Endothelial cell of umbilical vein (primary cell): ENCODE measurements at regions of chr16 and their contacts with region 1.

Region 1: GRCh38 chr16:75622761-75623605 is at the start of gene ADAT1:
- DNase-seq: peak; percentile 99
- H3K4me3 ChIP-seq: peak within 1 kb of the TSS; percentile 49 to 96 (median 94)
- H3K27ac ChIP-seq: peak within 1 kb of the TSS; percentile 75
- H3K4me1 ChIP-seq: peaks cover 24% of the 10 kb centered on the region
- H3K27me3 ChIP-seq: no peaks in the 10 kb centered on the region
- CTCF ChIP-seq: no peak
- POLR2A ChIP-seq: peak; percentile 95
- total RNA-seq, gene ADAT1: 56.6 and 57.9 TPM in 2 replicates

Region 2: DNA sequence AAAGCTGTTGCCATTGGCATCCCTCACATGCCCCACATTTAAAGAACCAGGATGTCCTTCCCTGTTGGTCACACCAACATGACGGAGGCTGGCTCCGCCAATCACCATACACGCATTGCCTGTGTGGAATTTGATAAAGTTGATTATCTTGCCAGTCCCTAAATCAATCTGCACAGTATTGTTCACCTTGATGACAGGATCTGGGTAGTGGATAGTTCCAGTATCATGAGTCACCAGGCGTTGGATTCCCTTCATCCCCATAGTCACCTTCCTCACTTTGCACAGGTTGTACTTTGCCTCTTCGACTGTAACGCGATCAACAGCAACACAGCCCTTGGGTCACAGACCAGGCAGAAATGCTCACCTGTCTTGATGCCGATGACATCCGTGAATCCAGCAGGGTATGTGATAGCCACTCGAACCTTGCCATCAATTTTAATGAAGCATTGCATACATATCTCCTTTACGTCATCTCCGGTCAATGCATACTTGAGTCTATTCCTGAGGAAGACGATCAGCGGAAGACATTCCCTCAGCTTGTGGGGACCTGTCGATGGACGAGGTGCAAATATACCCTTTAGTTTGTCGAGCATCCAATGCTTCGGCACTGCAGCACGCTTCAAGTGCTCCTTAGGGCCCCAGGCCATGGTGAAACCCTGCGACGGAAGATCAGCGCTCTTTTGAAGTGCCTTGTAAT is 430.2 kb before region 1 on chr16:
- CTCF ChIA-PET with region 1: no interaction called
- POLR2A ChIA-PET with region 1: no interaction called
- dilution Hi-C with region 1: no loop called
- intact Hi-C with region 1: no loop called
- DNase-seq: no peak
- H3K4me3 ChIP-seq: no peak overlapping the region
- H3K27ac ChIP-seq: no peak overlapping the region
- H3K4me1 ChIP-seq: no peaks in the 10 kb centered on the region
- H3K27me3 ChIP-seq: peaks cover 6 to 7% of the 10 kb centered on the region in 2 experiments
- CTCF ChIP-seq: no peak
- POLR2A ChIP-seq: no peak

Region 3: DNA sequence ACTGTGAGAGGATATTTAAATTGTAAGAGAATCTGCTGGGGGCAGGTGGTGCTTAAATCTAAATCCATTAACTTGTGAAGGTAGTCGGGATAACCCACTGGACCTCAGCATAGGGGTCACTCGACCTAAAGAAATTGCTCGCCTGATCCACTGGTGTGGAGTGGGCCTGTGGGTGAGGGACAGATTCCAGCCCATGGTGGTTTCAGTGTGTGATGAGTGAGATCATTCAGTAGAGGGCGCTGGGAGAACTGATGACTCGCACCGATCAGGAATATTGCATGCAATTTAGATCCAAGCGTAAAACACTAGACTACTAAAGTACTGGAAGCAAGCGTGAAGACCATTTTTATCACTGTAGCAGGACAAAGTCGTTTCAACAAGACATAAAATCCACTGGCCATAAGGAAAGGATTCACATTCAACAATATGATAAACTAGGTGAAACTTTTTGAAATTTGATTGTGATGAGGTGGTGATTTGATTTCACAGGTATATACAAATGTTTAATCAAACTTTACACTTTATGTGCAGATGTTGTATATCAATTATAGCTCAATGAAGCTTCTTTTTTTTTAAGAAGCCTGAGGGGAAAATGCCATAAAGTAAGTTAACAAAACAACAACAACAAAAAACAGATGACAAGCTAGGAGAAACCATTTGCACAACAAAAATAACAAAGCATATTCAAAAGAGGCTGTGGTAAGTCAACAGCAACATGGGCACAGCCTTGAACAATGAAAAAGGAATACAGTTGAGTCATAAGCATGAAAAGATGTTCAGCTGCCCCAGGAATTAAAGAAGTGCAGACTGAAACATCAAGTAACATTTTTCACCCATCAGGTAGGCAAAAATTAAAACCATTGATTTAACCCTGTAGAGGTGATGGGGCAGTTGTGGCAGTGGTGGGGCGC is 151.0 kb before region 1 on chr16:
- CTCF ChIA-PET with region 1: interaction called, 10 read pairs
- POLR2A ChIA-PET with region 1: no interaction called
- dilution Hi-C with region 1: no loop called
- intact Hi-C with region 1: loop called (anchors 1 kb)
- DNase-seq: peak; percentile 67
- H3K4me3 ChIP-seq: no peak overlapping the region
- H3K27ac ChIP-seq: no peak overlapping the region
- H3K4me1 ChIP-seq: no peaks in the 10 kb centered on the region
- H3K27me3 ChIP-seq: no peaks in the 10 kb centered on the region
- CTCF ChIP-seq: peak; percentile 65 to 74
- POLR2A ChIP-seq: no peak

Region 4: GRCh38 chr16:75566040-75566810 is 56.8 kb before region 1 on chr16 and contains the start of gene GABARAPL2:
- CTCF ChIA-PET with region 1: interaction called, 4 read pairs
- POLR2A ChIA-PET with region 1: no interaction called
- dilution Hi-C with region 1: no loop called
- intact Hi-C with region 1: loop called (anchors 1 kb)
- DNase-seq: peak; percentile 84
- H3K4me3 ChIP-seq: peak within 1 kb of the TSS; percentile 48 to 83 (median 79)
- H3K27ac ChIP-seq: no peak within 1 kb of the TSS
- H3K4me1 ChIP-seq: peaks cover 9% of the 10 kb centered on the region
- H3K27me3 ChIP-seq: peaks cover 7 to 24% of the 10 kb centered on the region in 2 experiments
- CTCF ChIP-seq: no peak
- POLR2A ChIP-seq: peak; percentile 66
- total RNA-seq, gene GABARAPL2: 77.9 and 82.5 TPM in 2 replicates

Region 5: DNA sequence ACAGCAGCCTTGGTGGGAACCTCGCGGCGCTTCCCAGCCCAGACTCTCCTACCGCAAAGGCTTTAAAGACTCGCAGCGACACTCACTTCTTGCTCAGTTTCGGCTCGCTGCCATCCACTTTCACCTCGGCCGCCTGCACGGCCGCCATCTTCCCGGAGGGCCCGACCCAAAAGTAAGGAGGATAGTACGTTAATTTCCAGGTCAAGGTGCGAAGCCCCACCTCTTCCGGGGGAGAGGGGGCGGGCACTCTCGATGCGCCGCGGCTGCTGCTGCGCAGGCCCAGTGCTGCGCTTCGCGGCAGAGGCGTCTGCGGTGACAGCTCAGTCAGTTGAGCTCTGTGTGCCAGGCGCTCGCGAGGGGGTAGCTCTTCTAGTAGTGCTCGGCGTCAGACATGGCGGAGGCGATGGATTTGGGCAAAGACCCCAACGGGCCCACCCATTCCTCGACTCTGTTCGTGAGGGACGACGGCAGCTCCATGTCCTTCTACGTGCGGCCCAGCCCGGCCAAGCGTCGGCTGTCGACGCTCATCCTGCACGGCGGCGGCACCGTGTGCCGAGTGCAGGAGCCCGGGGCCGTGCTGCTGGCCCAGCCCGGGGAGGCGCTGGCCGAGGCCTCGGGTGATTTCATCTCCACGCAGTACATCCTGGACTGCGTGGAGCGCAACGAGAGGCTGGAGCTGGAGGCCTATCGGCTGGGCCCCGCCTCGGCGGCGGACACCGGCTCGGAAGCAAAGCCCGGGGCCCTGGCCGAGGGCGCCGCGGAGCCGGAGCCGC is 24.7 kb after region 1 on chr16 and contains the starts of genes KARS1 and TERF2IP:
- CTCF ChIA-PET with region 1: interaction called, 8 read pairs
- POLR2A ChIA-PET with region 1: interaction called, 12 read pairs
- dilution Hi-C with region 1: no loop called
- intact Hi-C with region 1: loop called (anchors 1 kb)
- DNase-seq: peak; percentile 97
- H3K4me3 ChIP-seq: peak within 1 kb of the TSS; percentile 95 to 98 (median 98)
- H3K27ac ChIP-seq: peak within 1 kb of the TSS; percentile 67
- H3K4me1 ChIP-seq: peaks cover 32% of the 10 kb centered on the region
- H3K27me3 ChIP-seq: no peaks in the 10 kb centered on the region
- CTCF ChIP-seq: no peak
- POLR2A ChIP-seq: peak; percentile 92
- total RNA-seq, gene KARS1: 137 and 146 TPM in 2 replicates
- total RNA-seq, gene TERF2IP: 40.7 and 41.5 TPM in 2 replicates